Prostate gland (tissue), 2 donors: ENCODE measurements at regions of chr6 and their contacts with region 1.

Region 1: DNA sequence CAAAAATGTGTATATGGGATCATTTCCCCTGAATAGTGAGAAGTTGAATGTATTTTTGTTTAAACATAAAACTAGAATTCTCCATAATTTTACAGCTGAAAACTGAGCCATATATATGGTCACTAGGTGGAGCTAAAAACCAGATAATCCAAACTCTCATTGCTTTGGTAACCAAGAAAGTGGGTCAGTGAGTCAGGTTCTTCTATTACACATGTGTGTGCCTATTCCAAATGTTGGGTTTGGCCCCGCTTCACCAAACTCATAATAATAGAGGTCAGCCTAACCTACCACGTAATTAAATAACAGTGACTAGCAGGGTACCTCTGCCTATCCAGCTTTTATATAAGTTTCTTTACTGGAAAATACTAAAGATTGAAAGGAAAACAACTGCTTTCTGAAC is 19.3 kb upstream of the RNGTT start:
- DNase-seq: peak; percentile 62
- H3K4me3 ChIP-seq: no peak overlapping the region
- H3K27ac ChIP-seq: no peak overlapping the region
- H3K4me1 ChIP-seq: no peaks in the 10 kb centered on the region
- H3K27me3 ChIP-seq: no peaks in the 10 kb centered on the region
- CTCF ChIP-seq: peak; percentile 36 to 86 (median 74)
- POLR2A ChIP-seq: no peak

Region 2: GRCh38 chr6:89013438-89013837 is 30.7 kb after region 1 on chr6:
- intact Hi-C with region 1: no loop called
- DNase-seq: no peak
- H3K4me3 ChIP-seq: no peak overlapping the region
- H3K27ac ChIP-seq: no peak overlapping the region
- H3K4me1 ChIP-seq: no peaks in the 10 kb centered on the region
- H3K27me3 ChIP-seq: no peaks in the 10 kb centered on the region
- CTCF ChIP-seq: no peak
- POLR2A ChIP-seq: no peak

Region 3: DNA sequence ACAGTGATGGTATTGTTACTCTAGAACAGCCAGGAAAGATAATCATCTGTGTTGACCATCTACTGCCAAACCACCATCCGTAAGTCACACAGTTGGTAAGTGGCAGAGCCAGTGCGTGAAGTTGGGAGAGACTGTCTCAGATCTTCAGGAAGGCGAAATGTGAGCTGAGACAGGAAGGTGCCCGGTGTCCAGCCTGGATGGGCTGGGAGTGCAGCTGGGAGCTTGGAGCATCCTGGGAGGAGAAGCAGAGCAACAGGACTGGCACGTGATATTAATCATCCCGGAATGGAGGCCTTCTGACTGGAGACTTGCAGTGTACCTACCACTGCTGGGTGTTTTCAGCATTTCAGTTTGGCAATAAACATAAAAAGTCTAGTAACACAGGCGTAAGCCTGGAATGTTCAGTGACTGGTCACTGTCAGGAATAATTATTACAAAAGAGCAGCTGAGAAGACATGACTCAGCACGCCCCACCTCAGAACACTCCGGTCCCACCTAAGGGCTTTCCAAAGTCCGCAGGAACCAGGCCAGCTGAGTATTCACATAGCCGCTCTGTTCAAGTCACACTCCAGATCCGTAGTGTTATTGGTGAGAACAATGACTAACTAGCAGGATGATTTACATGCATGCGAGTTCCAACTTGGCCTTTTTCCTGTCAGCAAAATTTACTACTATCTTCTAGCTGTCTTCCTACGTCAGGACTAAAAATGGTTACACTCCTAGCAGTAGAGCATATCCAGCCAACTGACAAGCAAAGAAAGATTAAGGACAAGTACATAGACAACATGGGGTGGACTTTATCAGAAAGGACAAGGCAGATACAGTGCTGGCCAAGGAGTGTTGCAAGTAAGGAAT is 52.8 kb after region 1 on chr6:
- intact Hi-C with region 1: loop called (anchors 10 kb)
- DNase-seq: peak; percentile 93
- H3K4me3 ChIP-seq: peak overlapping the region in 1 of 2 donors; percentile 2
- H3K27ac ChIP-seq: peak overlapping the region; percentile 75 to 81
- H3K4me1 ChIP-seq: peaks cover 3% of the 10 kb centered on the region
- H3K27me3 ChIP-seq: no peaks in the 10 kb centered on the region
- CTCF ChIP-seq: no peak
- POLR2A ChIP-seq: peak; percentile 23

Region 4: DNA sequence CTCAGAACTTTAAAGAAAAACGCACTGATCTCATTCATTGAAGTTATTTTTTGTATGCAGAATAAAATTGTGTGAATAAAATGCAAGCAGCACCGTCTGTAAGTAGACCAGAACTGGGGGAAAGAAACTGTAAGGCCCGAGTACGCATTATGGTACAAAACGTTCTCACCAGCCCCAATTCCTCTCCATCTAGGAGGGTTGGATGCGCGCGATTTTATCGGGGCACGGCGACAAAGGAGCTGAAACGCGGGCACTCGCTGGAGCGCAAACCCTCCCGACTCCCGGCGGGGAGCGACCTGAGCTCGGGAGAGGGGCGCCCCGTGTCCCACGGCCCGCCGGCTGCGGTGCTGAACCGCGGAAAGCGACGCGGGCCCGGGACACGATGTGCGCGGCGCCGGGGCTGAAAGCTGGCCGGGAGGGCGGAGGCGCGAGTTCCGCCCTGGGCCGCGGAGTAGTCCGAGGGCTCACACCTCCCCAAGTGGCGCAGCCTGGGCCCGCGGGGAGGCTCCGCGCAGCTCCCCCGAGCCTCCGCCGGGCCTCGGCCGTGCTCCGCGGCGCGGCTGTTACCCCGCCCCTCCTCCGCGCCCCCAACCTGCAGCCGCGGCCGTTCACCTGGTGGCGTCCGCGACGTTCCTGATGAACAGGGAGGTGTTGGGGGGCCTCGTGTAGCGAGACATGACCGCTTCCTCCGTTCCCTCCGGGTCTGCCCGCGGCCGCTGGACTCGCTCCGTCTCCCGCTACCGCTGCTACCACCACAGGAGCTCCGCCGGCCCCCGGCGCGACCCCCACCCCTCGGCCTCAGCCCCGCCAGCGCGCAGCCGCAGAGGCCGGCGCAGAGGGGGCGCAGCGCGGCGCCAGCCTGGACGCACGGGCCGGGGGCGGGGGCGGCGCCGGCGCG is 134.7 kb after region 1 on chr6 and contains the start of gene SRSF12:
- intact Hi-C with region 1: loop called (anchors 2 kb)
- DNase-seq: peak; percentile 19
- H3K4me3 ChIP-seq: peak within 1 kb of the TSS; percentile 47 to 65
- H3K27ac ChIP-seq: peak within 1 kb of the TSS; percentile 13 to 38
- H3K4me1 ChIP-seq: no peaks in the 10 kb centered on the region
- H3K27me3 ChIP-seq: no peaks in the 10 kb centered on the region
- CTCF ChIP-seq: peak in 2 of 4 experiments; percentile 8 to 20
- POLR2A ChIP-seq: no peak
- total RNA-seq, gene SRSF12: 1.0 to 5.7 TPM

Region 5: DNA sequence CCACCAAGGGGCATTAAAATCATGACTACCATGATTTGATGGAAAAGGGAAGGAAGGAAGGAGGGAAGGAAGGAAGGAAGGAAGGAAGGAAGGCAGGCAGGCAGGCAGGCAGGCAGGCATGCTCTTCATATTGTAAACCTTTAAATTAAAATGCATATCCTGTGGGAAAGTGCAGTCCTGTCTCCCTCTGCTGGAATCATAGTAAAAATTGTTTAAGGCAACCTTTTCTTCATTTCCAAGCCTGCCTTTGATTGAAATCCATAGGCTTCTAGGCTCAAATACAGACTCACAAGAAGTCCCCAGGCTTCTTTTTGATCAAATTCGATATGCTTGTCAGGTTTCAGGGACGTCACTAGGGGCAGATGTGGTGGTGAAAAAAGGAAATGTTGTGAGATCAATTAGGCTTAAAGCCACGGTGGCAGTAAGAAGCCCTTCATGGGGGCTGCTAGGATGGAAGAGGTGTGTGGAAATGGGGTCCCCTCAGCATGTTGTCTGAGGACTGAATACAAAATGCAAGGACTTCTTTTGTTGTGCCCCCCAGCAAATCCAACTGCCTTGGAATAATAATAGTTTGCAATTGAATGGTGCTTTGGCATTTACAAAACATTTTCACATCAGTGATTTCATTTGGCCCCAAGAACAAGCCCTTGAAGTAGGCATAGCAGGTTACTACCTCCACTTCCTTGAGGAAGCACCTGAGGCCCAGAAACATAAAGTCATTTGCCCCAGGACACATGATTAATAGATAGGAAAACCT is 260.0 kb after region 1 on chr6:
- intact Hi-C with region 1: loop called (anchors 5 kb)
- DNase-seq: peak; percentile 27
- H3K4me3 ChIP-seq: no peak overlapping the region
- H3K27ac ChIP-seq: no peak overlapping the region
- H3K4me1 ChIP-seq: no peaks in the 10 kb centered on the region
- H3K27me3 ChIP-seq: no peaks in the 10 kb centered on the region
- CTCF ChIP-seq: peak in 3 of 4 experiments; percentile 35 to 75 (median 72)
- POLR2A ChIP-seq: no peak

Region 6: GRCh38 chr6:89371849-89372505 is 389.3 kb after region 1 on chr6:
- intact Hi-C with region 1: loop called (anchors 5 kb)
- DNase-seq: peak; percentile 49
- H3K4me3 ChIP-seq: no peak overlapping the region
- H3K27ac ChIP-seq: peak overlapping the region in 1 of 2 donors; percentile 32
- H3K4me1 ChIP-seq: no peaks in the 10 kb centered on the region
- H3K27me3 ChIP-seq: no peaks in the 10 kb centered on the region
- CTCF ChIP-seq: peak; percentile 70 to 81 (median 74)
- POLR2A ChIP-seq: no peak